ENCODE measurements at regions of chr11 and their contacts with region 1.

Region 1: DNA sequence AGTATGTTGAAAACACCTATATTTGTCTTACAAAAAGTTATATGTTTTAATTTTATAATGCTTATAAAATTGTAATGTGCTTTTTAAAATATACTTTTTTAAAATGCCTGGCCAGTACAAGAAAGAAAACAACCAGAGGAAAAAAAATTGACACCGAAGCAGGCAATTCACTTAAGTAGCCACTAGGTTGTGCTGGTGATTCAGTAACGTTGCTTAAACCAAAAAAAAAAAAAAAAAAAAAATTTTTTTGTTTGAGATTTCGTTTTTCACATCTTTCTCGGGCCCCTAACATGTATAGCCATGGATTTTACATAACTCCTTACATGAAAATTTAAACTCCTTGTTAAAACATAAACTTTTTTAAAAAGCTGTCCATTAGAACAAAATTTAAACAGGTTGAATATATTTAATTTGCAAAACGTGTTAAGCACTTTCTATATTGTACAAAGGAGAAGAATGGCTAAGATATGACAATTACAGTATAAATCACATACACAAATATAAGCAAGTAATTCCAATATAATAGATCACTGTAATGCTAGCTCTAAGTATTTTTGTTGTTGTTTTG is 9.2 kb downstream of the OR8B4 start:
- DNase-seq: peak; percentile 41
- H3K4me3 ChIP-seq: no peak overlapping the region
- H3K27ac ChIP-seq: no peak overlapping the region
- H3K27me3 ChIP-seq: peaks cover 9% of the 10 kb centered on the region
- CTCF ChIP-seq: peak; percentile 81

Region 2: GRCh38 chr11:124402326-124402922 is 13.0 kb before region 1 on chr11:
- CTCF ChIA-PET with region 1: interaction called, 148 read pairs
- POLR2A ChIA-PET with region 1: no interaction called
- DNase-seq: peak; percentile 74
- H3K4me3 ChIP-seq: no peak overlapping the region
- H3K27ac ChIP-seq: no peak overlapping the region
- H3K27me3 ChIP-seq: no peaks in the 10 kb centered on the region
- CTCF ChIP-seq: peak; percentile 88

Region 3: DNA sequence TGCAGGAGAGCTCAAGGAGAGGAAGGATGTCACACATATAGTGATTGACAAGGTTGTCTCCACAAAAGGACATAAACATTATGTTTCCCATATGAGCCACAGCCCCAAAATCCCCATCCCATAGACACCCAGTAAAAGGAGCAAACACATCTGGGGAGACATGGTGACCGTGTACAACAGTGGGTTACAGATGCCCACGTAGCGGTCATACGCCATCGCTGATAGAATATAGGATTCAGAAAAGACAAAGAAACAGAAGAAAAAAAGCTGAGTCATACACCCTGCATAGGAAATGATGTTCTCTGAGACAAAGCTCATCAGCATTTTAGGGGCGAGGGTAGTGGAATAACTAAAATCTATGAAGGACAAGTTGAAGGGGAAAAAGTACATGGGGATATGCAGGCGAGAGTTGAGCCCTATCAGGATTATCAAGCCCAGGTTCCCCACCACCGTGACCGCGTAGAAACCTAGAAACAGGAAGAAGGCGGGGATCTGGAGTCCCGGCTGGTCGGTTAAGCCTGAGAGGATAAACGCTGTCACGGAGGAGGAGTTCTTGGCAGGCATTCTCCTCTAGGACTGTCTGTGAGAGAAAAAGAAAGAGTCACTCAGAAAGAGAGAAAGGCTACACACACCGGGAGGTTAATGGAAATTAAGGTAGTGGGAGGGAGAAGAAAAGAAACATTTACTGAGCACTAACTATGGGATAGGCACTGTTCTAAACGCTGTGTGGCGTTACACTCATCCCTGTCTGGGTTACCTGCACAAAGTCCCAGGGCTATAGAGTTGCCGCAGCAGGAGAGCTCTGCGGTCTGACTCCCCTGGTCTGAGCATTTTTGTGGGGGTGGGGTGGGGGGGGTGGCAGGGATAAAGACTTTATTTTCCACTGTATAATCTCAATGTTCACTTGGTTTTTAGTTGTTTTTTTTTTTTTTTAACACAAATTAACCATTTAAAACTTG is 66.2 kb after region 1 on chr11:
- CTCF ChIA-PET with region 1: interaction called, 15 read pairs
- POLR2A ChIA-PET with region 1: no interaction called
- DNase-seq: peak; percentile 10
- H3K4me3 ChIP-seq: peak overlapping the region; percentile 39
- H3K27ac ChIP-seq: no peak overlapping the region
- H3K27me3 ChIP-seq: no peaks in the 10 kb centered on the region
- CTCF ChIP-seq: no peak

Region 4: GRCh38 chr11:124602193-124602592 is 186.8 kb after region 1 on chr11:
- CTCF ChIA-PET with region 1: interaction called, 21 read pairs
- POLR2A ChIA-PET with region 1: no interaction called
- DNase-seq: no peak
- H3K4me3 ChIP-seq: no peak overlapping the region
- H3K27ac ChIP-seq: no peak overlapping the region
- H3K27me3 ChIP-seq: no peaks in the 10 kb centered on the region
- CTCF ChIP-seq: no peak

Region 5: GRCh38 chr11:124829986-124830385 is 414.5 kb after region 1 on chr11:
- CTCF ChIA-PET with region 1: interaction called, 12 read pairs
- POLR2A ChIA-PET with region 1: no interaction called
- DNase-seq: no peak
- H3K4me3 ChIP-seq: no peak overlapping the region
- H3K27ac ChIP-seq: no peak overlapping the region
- H3K27me3 ChIP-seq: peaks cover 36% of the 10 kb centered on the region
- CTCF ChIP-seq: no peak